ENCODE measurements at regions of chr1 and their contacts with region 1.

Region 1: GRCh38 chr1:113871597-113872113 is at the start of gene PTPN22:
- DNase-seq: peak; percentile 80
- H3K4me3 Mint-ChIP-seq: peak within 1 kb of the TSS; percentile 93
- H3K27ac Mint-ChIP-seq: peak within 1 kb of the TSS; percentile 98
- H3K4me1 Mint-ChIP-seq: peaks cover 73% of the 10 kb centered on the region
- H3K27me3 Mint-ChIP-seq: no peaks in the 10 kb centered on the region
- total RNA-seq, gene PTPN22: 66.2 and 66.7 TPM in 2 replicates

Region 2: GRCh38 chr1:113146242-113147072 is 725.2 kb before region 1 on chr1:
- intact Hi-C with region 1: no loop called
- DNase-seq: peak; percentile 8
- H3K4me3 Mint-ChIP-seq: no peak overlapping the region
- H3K27ac Mint-ChIP-seq: no peak overlapping the region
- H3K4me1 Mint-ChIP-seq: peaks cover 32% of the 10 kb centered on the region
- H3K27me3 Mint-ChIP-seq: no peaks in the 10 kb centered on the region

Region 3: GRCh38 chr1:113734357-113735055 is 137.1 kb before region 1 on chr1:
- intact Hi-C with region 1: loop called (anchors 5 kb)
- DNase-seq: no peak
- H3K4me3 Mint-ChIP-seq: no peak overlapping the region
- H3K27ac Mint-ChIP-seq: no peak overlapping the region
- H3K4me1 Mint-ChIP-seq: peaks cover 17% of the 10 kb centered on the region
- H3K27me3 Mint-ChIP-seq: no peaks in the 10 kb centered on the region

Region 4: DNA sequence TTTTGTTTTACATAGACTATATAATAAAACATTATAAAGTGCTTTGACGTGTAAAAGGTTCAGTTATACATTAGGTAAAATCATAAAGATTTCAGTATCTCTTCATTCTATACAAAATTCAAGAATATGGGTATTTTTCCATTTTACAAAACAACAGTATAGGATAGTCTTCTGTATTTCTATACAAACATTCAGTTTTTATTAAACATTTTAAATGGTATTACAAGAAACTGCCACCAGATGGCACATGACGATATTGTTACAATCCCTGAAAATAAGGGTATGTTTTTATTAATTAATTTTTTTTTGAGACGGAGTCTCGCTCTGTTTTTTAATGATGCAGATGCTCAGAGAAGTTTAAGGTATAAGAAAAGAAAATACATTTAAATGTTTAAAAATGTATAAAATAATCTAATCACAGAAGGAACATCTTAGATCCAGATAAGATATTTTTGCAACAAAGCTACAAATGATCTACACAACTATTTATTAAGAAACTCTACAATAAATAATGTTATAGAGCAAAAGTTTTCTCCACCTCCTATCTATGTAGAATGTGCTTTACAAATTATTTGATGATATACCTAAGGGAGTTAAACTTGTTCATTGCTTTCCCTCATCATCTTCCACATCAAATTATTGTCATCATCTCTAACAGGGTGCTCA is 35.9 kb before region 1 on chr1:
- intact Hi-C with region 1: loop called (anchors 1 kb)
- DNase-seq: no peak
- H3K4me3 Mint-ChIP-seq: no peak overlapping the region
- H3K27ac Mint-ChIP-seq: no peak overlapping the region
- H3K4me1 Mint-ChIP-seq: peaks cover 7% of the 10 kb centered on the region
- H3K27me3 Mint-ChIP-seq: no peaks in the 10 kb centered on the region

Region 5: DNA sequence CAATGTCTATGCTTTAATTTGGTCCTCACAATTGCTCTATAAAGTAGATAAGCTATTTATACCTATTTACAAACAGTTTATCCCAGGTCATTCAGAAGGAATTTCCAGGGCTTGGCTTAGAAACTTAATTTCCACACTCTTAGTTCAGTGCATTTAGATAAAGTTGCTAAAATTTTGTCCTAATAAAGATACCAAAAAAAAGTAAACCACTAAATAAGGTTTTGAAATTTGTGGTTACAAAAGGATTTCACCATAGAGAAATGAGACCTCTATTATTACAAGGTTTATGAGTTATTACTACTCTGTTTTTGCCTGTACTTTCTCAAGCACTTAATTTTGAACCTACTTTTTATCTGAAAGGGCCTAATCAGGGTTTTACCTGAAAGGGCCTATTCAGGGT is 22.6 kb before region 1 on chr1:
- intact Hi-C with region 1: loop called (anchors 1 kb)
- DNase-seq: no peak
- H3K4me3 Mint-ChIP-seq: no peak overlapping the region
- H3K27ac Mint-ChIP-seq: no peak overlapping the region
- H3K4me1 Mint-ChIP-seq: peaks cover 14% of the 10 kb centered on the region
- H3K27me3 Mint-ChIP-seq: no peaks in the 10 kb centered on the region

Region 6: GRCh38 chr1:113859478-113860175 is 12.0 kb before region 1 on chr1:
- intact Hi-C with region 1: loop called (anchors 1 kb)
- DNase-seq: no peak
- H3K4me3 Mint-ChIP-seq: peak overlapping the region; percentile 24
- H3K27ac Mint-ChIP-seq: peak overlapping the region; percentile 62
- H3K4me1 Mint-ChIP-seq: peaks cover 43% of the 10 kb centered on the region
- H3K27me3 Mint-ChIP-seq: no peaks in the 10 kb centered on the region

Region 7: DNA sequence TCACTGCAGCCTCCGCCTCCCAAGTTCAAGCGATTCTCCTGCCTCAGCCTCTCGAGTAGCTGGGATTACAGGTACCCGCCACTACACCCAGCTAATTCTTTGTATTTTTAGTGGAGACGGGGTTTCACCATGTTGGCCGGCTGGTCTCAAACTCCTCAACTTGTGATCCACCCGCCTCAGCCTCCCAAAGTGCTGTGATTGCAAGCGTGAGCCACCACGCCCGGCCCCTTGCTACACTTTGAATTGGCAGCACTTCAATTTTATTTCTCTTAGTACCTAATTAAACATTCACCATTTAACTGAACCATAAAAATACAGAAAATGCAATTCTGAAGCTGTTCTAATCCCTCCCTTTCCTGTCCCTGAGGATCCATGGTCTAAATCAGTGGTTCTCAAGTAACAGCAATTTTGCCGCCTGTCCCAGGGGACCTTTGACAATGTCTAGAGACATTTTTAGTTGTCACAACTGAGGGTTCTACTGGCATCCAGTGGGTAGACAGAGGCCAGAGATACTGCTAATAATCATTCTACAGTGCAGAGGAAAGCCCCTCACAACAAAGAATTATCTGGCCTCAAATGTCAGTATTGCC is 20.1 kb after region 1 on chr1:
- intact Hi-C with region 1: loop called (anchors 1 kb)
- DNase-seq: no peak
- H3K4me3 Mint-ChIP-seq: no peak overlapping the region
- H3K27ac Mint-ChIP-seq: no peak overlapping the region
- H3K4me1 Mint-ChIP-seq: peaks cover 17% of the 10 kb centered on the region
- H3K27me3 Mint-ChIP-seq: no peaks in the 10 kb centered on the region

Region 8: GRCh38 chr1:113904674-113905434 is 33.2 kb after region 1 on chr1 and contains the starts of genes AP4B1 and DCLRE1B:
- intact Hi-C with region 1: loop called (anchors 1 kb)
- DNase-seq: peak; percentile 98
- H3K4me3 Mint-ChIP-seq: peak within 1 kb of the TSS; percentile 99
- H3K27ac Mint-ChIP-seq: peak within 1 kb of the TSS; percentile 95
- H3K4me1 Mint-ChIP-seq: peaks cover 58% of the 10 kb centered on the region
- H3K27me3 Mint-ChIP-seq: no peaks in the 10 kb centered on the region
- total RNA-seq, gene AP4B1: 36.3 and 40.9 TPM in 2 replicates
- total RNA-seq, gene DCLRE1B: 20.9 and 21.2 TPM in 2 replicates

Region 9: DNA sequence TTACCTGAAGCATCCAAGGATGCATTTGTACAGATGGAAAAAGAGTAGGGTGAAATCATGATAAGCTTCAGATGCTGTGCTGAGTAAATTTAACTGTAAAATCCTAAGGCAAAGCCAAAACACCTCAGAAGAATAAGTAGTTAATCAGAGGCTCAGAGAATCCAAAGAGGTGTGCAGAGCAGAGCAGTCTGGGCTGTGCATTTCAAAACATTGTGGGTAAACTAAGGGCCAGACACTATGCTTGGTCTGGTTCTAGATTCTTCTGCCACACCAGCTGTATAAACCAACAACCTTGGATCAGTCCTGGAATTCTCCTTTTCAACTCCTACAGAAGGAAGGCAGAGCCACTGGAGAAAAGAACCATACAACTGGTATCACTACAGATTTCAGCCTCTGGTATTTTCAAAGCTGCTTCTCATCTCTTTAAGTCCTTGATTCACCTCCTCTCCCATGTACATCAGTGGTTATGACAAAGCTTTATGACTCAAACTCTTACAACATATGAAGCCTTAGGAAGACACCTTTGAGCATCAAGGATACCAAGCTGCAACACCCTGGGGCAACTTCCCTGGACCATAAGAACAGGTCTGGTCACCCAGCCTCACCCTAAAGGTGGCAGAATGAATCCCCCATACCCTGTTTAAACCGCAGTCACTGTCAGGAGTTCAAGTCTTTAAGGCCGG is 45.9 kb after region 1 on chr1:
- intact Hi-C with region 1: no loop called
- DNase-seq: no peak
- H3K4me3 Mint-ChIP-seq: no peak overlapping the region
- H3K27ac Mint-ChIP-seq: no peak overlapping the region
- H3K4me1 Mint-ChIP-seq: no peaks in the 10 kb centered on the region
- H3K27me3 Mint-ChIP-seq: peaks cover 9% of the 10 kb centered on the region